Activated naive CD4-positive, alpha-beta T cell treated with anti-CD3 and anti-CD28 coated beads for 36 hours (primary cell): ENCODE measurements at regions of chr11 and their contacts with region 1.

Region 1: DNA sequence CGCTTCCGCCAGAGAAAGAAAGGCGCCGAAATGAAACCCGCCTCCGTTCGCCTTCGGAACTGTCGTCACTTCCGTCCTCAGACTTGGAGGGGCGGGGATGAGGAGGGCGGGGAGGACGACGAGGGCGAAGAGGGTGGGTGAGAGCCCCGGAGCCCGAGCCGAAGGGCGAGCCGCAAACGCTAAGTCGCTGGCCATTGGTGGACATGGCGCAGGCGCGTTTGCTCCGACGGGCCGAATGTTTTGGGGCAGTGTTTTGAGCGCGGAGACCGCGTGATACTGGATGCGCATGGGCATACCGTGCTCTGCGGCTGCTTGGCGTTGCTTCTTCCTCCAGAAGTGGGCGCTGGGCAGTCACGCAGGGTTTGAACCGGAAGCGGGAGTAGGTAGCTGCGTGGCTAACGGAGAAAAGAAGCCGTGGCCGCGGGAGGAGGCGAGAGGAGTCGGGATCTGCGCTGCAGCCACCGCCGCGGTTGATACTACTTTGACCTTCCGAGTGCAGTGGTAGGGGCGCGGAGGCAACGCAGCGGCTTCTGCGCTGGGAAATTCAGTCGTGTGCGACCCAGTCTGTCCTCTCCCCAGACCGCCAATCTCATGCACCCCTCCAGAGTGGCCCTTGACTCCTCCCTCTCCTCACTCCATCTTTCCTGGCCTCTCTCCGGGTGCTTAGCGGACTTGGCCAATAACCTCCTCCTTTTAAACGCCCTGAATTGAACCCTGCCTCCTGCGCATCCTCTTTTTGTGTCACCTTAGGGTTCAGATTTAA is at the start of gene ATM:
- DNase-seq: peak; percentile 99
- H3K4me3 Mint-ChIP-seq: no peak within 1 kb of the TSS
- H3K27ac Mint-ChIP-seq: no peak within 1 kb of the TSS
- H3K4me1 Mint-ChIP-seq: peaks cover 34% of the 10 kb centered on the region
- H3K27me3 Mint-ChIP-seq: no peaks in the 10 kb centered on the region
- total RNA-seq, gene ATM: 29.5 to 30.6 TPM

Region 2: DNA sequence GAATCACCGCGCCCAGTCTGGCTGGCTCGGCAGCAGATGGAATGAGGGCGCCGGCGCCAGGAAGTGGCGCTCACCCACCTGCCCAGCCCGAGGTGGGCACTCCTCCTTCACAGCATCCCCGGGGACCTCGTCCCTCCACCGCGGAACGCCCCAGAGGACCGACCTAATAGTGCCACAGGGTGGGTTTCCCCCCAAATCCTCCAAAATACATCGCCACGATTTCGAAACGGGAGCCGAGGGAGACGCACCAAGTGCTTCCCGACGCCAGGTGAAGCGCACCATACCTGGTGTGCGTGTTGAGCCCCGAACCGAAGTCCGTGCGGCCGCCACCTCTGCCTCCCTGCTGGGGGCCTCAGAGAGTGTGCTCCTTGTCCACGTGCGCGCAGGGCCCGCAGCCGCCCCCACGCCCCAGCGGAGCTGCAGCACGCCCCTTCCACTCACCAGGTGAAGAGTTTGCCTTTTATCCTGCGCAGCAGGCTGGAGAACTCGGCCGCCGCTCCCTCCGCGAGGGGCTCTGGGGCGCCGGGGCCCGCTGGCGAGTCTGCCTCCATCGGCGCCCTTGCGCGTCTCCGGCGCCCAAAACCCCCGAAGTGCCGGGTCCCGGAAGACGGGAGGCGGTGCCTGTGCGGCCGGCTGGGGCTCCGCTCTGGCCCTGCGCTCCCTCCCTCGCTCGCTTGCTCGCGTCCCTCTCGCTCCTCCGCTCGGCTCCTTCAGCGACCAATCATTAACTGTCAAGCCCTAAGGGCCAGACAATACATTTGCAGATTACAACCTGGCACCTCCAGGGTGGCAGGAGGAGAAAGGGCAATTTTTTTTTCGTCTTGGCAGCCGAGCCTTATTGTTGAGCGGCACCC is 364.4 kb before region 1 on chr11 and contains the start of gene SLC35F2:
- CTCF ChIA-PET with region 1: no interaction called
- intact Hi-C with region 1: loop called (anchors 5 kb)
- DNase-seq: peak; percentile 77
- H3K4me3 Mint-ChIP-seq: peak within 1 kb of the TSS; percentile 95
- H3K27ac Mint-ChIP-seq: peak within 1 kb of the TSS; percentile 91
- H3K4me1 Mint-ChIP-seq: peaks cover 21% of the 10 kb centered on the region
- H3K27me3 Mint-ChIP-seq: no peaks in the 10 kb centered on the region
- total RNA-seq, gene SLC35F2: 18.2 to 20.5 TPM

Region 3: DNA sequence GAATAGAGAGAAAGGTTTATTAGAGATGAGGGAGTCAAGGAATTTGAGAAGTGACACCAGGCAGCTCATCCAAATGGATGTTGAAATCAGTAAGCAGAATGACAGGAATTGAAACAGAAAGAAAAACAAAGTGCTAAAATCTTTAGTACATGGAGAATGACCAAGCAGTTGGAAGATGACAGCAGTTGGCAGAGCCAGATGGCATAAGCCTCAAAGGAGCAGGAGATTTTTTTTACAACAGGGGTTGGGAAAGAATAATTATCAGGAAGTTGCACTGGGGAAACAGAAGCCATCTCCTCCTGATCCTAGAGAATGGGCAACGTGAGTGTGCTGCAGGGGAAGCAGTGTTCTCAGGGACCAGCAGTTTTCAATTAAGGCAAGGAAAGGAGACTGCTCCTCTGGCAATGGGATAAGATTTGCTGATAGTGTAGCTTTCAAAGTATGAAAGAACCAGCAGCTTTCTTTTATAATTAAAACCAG is 265.7 kb before region 1 on chr11:
- CTCF ChIA-PET with region 1: no interaction called
- intact Hi-C with region 1: no loop called
- DNase-seq: no peak
- H3K4me3 Mint-ChIP-seq: no peak overlapping the region
- H3K27ac Mint-ChIP-seq: no peak overlapping the region
- H3K4me1 Mint-ChIP-seq: no peaks in the 10 kb centered on the region
- H3K27me3 Mint-ChIP-seq: peaks cover 19% of the 10 kb centered on the region

Region 4: DNA sequence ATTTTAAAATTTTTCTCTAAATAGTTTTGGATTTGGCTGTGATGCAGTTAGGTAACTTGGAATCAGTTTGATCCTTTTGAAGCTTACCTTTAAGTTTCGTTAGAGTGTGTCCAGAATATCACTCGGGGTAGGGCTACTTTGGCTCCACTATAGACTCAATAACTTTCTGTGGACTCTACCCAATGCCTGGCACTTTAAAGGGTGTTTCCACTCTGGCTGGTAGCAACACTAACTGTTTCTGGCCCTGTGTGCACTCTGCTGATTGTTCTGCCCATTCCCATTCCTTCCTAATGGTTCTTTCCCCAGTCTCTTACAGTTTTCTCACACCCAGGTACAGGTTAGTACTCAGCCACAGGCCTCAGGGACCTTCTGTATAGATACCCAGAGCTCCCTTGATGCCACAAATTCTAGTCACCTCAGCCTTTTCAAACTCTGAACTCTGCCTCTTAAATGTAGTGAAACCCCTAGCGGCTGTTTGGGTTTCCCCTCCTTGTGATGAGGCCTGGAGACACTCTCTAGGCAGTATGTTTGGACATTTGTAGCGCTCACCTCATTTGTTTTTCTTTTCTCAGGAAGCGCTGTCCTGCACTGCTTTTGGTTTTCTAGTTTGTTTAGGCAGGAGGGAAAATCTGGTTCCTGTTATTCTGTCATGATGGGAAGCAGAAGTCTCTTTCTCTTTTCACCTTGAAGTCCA is 197.3 kb before region 1 on chr11:
- CTCF ChIA-PET with region 1: no interaction called
- intact Hi-C with region 1: no loop called
- DNase-seq: peak; percentile 48
- H3K4me3 Mint-ChIP-seq: no peak overlapping the region
- H3K27ac Mint-ChIP-seq: no peak overlapping the region
- H3K4me1 Mint-ChIP-seq: peaks cover 43% of the 10 kb centered on the region
- H3K27me3 Mint-ChIP-seq: no peaks in the 10 kb centered on the region

Region 5: DNA sequence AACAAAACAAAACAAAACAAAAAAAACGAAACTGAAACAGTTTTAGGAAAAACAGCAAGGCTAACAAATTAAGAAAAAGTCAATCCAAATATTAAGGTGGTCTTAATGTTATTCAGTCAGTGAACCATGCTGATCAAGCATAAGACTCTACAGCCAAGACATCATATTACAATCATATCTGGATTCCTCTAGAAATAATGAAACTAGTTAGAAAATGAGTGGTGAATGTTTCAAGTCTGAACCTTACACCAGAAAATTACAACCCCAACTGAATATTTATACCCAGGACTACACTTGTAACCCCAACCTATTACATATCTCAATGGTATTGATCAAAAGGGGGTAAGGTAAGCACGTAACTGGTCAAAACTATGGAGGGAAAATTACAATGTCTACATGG is 52.7 kb before region 1 on chr11:
- CTCF ChIA-PET with region 1: no interaction called
- intact Hi-C with region 1: loop called (anchors 1 kb)
- DNase-seq: no peak
- H3K4me3 Mint-ChIP-seq: no peak overlapping the region
- H3K27ac Mint-ChIP-seq: no peak overlapping the region
- H3K4me1 Mint-ChIP-seq: peaks cover 39% of the 10 kb centered on the region
- H3K27me3 Mint-ChIP-seq: no peaks in the 10 kb centered on the region

Region 6: GRCh38 chr11:108278546-108278945 is 55.7 kb after region 1 on chr11:
- CTCF ChIA-PET with region 1: no interaction called
- intact Hi-C with region 1: loop called (anchors 1 kb)
- DNase-seq: peak; percentile 56
- H3K4me3 Mint-ChIP-seq: no peak overlapping the region
- H3K27ac Mint-ChIP-seq: peak overlapping the region; percentile 41
- H3K4me1 Mint-ChIP-seq: peaks cover 63% of the 10 kb centered on the region
- H3K27me3 Mint-ChIP-seq: no peaks in the 10 kb centered on the region

Region 7: GRCh38 chr11:108467091-108467823 is 244.4 kb after region 1 on chr11 and contains the start of gene C11orf65:
- CTCF ChIA-PET with region 1: no interaction called
- intact Hi-C with region 1: loop called (anchors 1 kb)
- DNase-seq: peak; percentile 98
- H3K4me3 Mint-ChIP-seq: peak within 1 kb of the TSS; percentile 94
- H3K27ac Mint-ChIP-seq: peak within 1 kb of the TSS; percentile 96
- H3K4me1 Mint-ChIP-seq: peaks cover 8% of the 10 kb centered on the region
- H3K27me3 Mint-ChIP-seq: no peaks in the 10 kb centered on the region
- total RNA-seq, gene C11orf65: 2.2 to 3.1 TPM

Region 8: GRCh38 chr11:108647701-108648527 is 425.0 kb after region 1 on chr11:
- CTCF ChIA-PET with region 1: interaction called, 10 read pairs
- intact Hi-C with region 1: loop called (anchors 1 kb)
- DNase-seq: peak; percentile 86
- H3K4me3 Mint-ChIP-seq: no peak overlapping the region
- H3K27ac Mint-ChIP-seq: no peak overlapping the region
- H3K4me1 Mint-ChIP-seq: no peaks in the 10 kb centered on the region
- H3K27me3 Mint-ChIP-seq: no peaks in the 10 kb centered on the region